Mammary epithelial cell (primary cell): ENCODE measurements at regions of chr18 and their contacts with region 1.

Region 1: GRCh38 chr18:3245853-3246634 is 1.6 kb upstream of the MYL12A start:
- DNase-seq: peak; percentile 85
- H3K4me3 ChIP-seq: peak overlapping the region; percentile 46 to 96 (median 48)
- H3K27ac ChIP-seq: peak overlapping the region; percentile 99
- H3K4me1 ChIP-seq: peaks cover 29% of the 10 kb centered on the region
- H3K27me3 ChIP-seq: no peaks in the 10 kb centered on the region
- CTCF ChIP-seq: peak; percentile 97 to 98

Region 2: DNA sequence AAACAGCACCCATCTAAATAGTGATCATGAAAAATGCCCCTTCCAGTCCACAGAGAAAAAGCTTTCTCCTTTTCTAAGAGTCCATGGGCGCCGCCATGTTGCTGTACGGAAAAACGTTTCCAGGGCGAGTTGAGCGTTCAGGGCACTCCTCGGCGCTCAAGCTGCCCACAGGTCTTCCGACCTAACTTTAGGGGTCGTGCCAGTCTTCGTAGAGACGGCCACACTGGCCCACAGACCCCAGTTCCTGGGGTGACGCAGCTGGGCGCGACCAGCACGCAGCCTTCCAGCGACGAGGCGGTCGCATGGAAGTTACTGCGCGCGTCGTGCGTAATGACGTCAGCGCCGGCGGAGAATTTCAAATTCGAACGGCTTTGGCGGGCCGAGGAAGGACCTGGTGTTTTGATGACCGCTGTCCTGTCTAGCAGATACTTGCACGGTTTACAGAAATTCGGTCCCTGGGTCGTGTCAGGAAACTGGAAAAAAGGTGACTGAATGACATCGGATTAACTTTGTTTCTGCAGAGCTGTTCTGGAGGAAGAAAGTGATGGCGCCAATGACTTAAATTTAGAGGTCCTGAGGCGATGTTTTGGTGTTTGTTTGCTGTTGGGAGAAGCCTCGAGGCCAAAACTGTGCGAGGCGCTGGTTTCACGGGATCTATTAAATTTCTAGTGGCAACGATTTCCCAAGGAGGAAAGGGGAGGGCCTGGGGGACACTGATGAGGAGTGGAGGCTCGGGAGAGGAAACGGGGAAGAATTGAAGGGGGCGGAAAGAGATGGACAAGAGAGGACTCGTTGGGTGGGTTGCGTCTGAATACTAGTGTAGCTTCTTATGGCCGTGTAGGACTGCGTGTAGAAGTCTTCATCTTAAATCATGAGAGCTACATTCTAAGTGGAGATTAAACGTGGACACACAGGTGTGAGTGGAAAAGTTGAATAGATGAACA is 674.6 kb before region 1 on chr18 and contains the starts of genes METTL4 and NDC80:
- CTCF ChIA-PET with region 1: no interaction called
- dilution Hi-C with region 1: no loop called
- in situ Hi-C with region 1: no loop called
- intact Hi-C with region 1: loop called (anchors 5 kb)
- DNase-seq: peak; percentile 88
- H3K4me3 ChIP-seq: peak within 1 kb of the TSS; percentile 81 to 97 (median 87)
- H3K27ac ChIP-seq: peak within 1 kb of the TSS; percentile 98
- H3K4me1 ChIP-seq: peaks cover 10% of the 10 kb centered on the region
- H3K27me3 ChIP-seq: no peaks in the 10 kb centered on the region
- CTCF ChIP-seq: no peak
- total RNA-seq, gene METTL4: 8.2 to 14.5 TPM
- total RNA-seq, gene NDC80: 1.7 to 29.8 TPM

Region 3: DNA sequence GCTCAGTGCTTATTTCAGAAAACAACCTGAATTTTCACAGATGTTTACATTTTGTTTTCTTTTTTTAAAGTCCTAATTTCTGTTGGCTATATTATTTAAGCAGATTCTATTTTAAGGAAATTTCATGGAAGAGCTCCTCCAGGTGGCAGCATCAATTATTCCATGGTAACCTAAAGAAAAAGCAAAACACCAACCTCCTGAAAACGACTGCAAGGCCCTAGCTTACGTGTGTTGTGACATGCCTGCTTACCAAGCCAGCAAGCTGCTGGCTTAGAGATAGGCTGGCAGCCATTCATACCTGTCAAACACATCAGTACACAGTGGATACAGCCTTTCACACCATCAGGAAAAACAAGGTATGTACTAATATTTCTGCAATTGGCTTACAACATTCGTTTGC is 298.0 kb before region 1 on chr18:
- CTCF ChIA-PET with region 1: interaction called, 5 read pairs
- dilution Hi-C with region 1: no loop called
- in situ Hi-C with region 1: loop called in 1 of 2 experiments (anchors 5 kb)
- intact Hi-C with region 1: loop called (anchors 1 kb)
- DNase-seq: peak; percentile 61
- H3K4me3 ChIP-seq: no peak overlapping the region
- H3K27ac ChIP-seq: no peak overlapping the region
- H3K4me1 ChIP-seq: no peaks in the 10 kb centered on the region
- H3K27me3 ChIP-seq: no peaks in the 10 kb centered on the region
- CTCF ChIP-seq: peak; percentile 34 to 53

Region 4: GRCh38 chr18:3012964-3013804 is 232.9 kb before region 1 on chr18 and contains the start of gene LPIN2:
- CTCF ChIA-PET with region 1: no interaction called
- dilution Hi-C with region 1: no loop called
- in situ Hi-C with region 1: no loop called
- intact Hi-C with region 1: loop called (anchors 5 kb)
- DNase-seq: peak; percentile 91
- H3K4me3 ChIP-seq: peak within 1 kb of the TSS; percentile 70 to 74 (median 72)
- H3K27ac ChIP-seq: peak within 1 kb of the TSS; percentile 51
- H3K4me1 ChIP-seq: peaks cover 18% of the 10 kb centered on the region
- H3K27me3 ChIP-seq: no peaks in the 10 kb centered on the region
- CTCF ChIP-seq: no peak
- total RNA-seq, gene LPIN2: 9.9 to 20.3 TPM

Region 5: GRCh38 chr18:3151399-3152264 is 94.4 kb before region 1 on chr18:
- CTCF ChIA-PET with region 1: interaction called, 13 read pairs
- dilution Hi-C with region 1: no loop called
- in situ Hi-C with region 1: no loop called
- intact Hi-C with region 1: loop called (anchors 1 kb)
- DNase-seq: no peak
- H3K4me3 ChIP-seq: no peak overlapping the region
- H3K27ac ChIP-seq: no peak overlapping the region
- H3K4me1 ChIP-seq: peaks cover 4% of the 10 kb centered on the region
- H3K27me3 ChIP-seq: no peaks in the 10 kb centered on the region
- CTCF ChIP-seq: peak; percentile 61 to 76

Region 6: DNA sequence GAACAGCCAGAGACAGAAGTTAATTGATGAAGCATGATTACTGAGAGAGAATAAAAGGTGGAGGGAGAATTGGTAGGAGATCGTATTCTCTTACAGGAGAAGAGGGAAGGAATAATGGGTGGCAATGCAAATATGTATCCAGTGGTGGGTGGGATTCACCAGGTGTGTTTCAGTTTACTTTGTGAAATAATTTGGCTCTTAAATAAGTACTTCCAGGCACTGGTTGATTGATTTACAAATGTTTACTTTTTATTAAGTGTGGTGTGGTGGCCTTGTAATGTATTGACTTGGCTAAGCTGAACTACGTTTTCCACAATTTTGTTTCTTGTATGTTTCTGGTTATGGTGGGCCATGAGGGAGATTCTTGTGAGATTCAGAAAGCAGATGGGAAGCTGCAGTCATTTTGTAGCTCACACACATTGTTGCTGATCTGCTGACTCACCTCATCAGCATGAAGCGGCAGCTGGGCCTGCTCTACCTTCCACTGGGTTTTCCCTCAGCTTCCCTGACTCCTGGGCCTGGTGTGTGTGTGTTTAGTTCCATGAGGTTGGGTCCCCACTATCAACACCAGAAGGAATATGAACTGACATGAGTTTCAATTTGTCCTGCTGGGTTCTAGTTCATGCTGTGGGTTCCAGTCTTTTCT is 48.5 kb after region 1 on chr18:
- CTCF ChIA-PET with region 1: no interaction called
- dilution Hi-C with region 1: no loop called
- in situ Hi-C with region 1: no loop called
- intact Hi-C with region 1: no loop called
- DNase-seq: peak; percentile 19
- H3K4me3 ChIP-seq: no peak overlapping the region
- H3K27ac ChIP-seq: no peak overlapping the region
- H3K4me1 ChIP-seq: peaks cover 7% of the 10 kb centered on the region
- H3K27me3 ChIP-seq: no peaks in the 10 kb centered on the region
- CTCF ChIP-seq: no peak